ENCODE measurements at regions of chr2 and their contacts with region 1.

Region 1: GRCh38 chr2:121530212-121530705 is 421 bp upstream of the RNU4ATAC start:
- DNase-seq: peak; percentile 76

Region 2: DNA sequence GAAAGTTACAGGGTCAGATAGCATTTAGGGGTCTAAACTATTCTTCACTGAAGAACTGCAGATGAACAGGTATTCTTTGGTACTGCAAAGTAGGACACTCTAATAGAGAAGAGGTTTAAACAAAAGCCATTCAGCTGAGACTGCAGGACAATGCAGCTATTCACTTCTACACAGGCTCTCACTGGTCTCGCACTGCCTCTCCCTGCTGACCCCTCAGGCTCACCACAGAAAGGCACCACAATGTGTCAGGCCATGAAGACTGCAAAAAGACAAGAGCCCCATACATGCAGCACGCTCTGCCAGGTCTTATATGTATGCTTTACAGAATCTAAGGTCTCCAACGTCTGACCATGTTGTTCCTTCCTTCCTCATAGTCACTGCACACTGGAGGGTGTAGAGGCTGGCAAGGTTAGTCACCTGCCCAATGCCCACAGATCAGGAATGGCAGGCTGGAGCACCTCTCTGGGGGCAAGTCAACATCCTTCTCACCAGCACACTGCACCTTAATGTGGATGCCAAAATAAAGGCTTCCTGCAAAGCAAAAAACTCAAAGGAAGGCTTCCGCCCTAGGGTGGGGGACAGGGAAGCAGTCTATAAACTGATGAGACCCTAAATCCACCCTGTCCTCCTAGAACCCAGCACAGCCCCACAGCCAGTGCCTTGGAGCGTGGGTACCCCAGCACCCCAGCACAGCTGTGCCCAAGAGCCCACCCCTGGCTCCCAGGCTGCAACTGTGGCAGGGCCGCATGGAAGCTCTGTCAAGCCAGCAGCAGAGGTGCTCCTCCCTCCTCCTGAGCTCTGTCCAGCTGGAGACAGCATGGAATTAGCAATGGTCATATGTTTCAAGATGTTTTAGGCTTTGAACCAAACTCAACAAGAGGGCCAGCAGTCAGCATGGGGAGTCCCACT is 10.3 kb before region 1 on chr2:
- CTCF ChIA-PET with region 1: interaction called, 4 read pairs
- POLR2A ChIA-PET with region 1: interaction called, 11 read pairs
- DNase-seq: no peak

Region 3: GRCh38 chr2:121596221-121597080 is 66.2 kb after region 1 on chr2:
- CTCF ChIA-PET with region 1: no interaction called
- POLR2A ChIA-PET with region 1: interaction called, 11 read pairs
- DNase-seq: peak; percentile 45

Region 4: DNA sequence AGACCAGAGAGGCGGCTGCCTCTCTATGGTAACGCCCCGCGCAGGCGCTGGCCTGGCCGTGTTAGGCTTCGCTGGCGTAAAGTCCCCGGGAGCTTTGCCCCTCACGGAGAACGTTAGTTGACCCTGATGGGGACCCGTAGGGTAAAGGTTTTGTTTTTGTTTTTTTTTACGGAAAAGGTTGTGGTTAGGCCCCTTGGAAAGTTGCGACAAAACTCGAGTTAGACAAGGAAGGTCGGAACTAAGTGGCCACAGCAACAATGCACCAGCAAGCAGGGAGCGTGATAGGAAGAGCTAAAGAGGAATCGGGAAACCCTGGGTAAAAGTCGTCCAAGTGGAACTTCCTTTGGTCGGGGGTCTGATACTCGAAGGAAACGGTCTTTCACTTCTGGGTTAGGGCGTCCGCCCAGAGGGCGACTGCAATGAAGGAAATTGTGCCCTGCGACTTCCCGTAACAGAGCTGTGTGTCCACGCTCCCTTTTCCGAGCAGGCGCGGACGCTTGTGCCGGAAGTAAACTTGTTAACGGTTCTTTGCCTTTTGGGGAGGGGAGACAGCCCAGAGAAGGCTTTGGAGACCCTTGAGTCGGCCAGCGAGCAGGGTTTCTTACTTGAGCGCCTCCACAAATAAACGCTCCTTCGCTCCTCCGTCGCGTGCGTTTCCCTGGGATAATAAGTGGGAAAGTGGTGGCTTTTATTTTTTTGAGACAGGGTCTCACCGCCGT is 119.5 kb after region 1 on chr2:
- CTCF ChIA-PET with region 1: interaction called, 4 read pairs
- POLR2A ChIA-PET with region 1: interaction called, 57 read pairs
- DNase-seq: peak; percentile 72

Region 5: DNA sequence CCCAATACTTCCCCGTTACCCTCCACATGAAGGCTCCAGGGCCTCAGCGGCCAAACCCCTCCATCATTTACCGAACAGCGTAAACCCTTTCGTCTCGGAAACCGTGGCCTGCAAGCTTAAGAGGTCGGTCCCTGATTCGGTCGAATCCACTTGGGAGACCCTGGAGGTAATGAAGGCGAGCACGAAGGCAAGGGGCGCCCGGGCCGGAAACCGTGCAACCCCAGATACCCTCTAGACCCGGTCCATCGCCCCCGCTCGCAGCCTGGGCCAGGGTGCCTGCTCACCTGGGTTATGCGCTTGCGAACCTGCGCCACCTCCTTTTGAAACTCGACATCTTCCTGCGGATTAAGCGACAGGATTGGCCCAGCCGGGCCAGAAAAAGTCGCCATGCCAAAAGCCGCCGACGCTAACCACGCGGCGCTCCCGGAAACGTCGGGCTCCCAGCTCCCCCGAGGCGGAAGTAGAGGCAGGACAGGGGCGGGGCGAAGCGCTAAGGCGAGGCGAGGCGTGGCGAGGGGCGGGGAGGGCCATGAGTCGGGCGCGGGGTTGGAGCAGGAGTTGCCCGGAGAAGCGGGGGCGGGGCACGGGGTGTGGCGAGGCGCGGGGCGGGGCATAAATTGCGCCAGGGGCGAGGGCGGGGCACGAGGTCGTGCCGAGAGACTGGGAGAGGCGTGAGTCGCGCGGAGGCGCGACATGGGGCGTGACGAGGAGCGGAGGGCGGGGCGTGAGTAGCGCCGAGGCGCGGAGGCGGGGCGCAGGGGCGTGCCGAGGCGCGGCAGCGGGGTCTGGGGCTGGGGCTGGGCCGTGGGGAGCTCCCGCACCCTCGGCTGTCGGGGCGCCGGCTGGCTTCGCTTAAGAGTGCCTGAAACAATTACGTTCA is 206.4 kb after region 1 on chr2 and contains the start of gene NIFK:
- CTCF ChIA-PET with region 1: no interaction called
- POLR2A ChIA-PET with region 1: interaction called, 22 read pairs
- DNase-seq: peak; percentile 99